OCI-LY7 (cell line): ENCODE measurements at regions of chr12 and their contacts with region 1.

Region 1: DNA sequence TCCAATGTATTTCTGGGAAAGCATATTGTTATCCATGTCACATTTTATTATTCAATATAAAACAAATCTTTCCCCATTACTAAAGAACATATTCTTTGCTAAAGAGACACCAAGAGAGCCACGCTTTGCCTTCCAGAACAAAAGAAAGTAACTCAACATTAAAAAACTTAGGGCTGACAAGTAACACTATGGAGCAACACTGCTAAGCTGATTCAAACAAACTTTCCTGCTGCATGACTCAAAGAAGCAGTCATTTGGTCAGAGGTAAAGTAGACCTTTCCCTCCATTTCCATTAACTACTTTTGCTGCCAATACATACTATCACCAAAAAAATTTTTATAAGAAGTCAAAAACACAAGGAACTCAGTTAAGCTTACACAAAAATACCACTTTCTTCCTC is 83.0 kb downstream of the DENND5B start:
- DNase-seq: no peak
- H3K4me3 ChIP-seq: no peak overlapping the region
- H3K27ac ChIP-seq: no peak overlapping the region
- H3K4me1 ChIP-seq: peaks cover 13% of the 10 kb centered on the region
- CTCF ChIP-seq: no peak

Region 2: GRCh38 chr12:31518680-31519227 is 10.8 kb after region 1 on chr12:
- CTCF ChIA-PET with region 1: interaction called, 5 read pairs
- POLR2A ChIA-PET with region 1: interaction called, 11 read pairs
- intact Hi-C with region 1: no loop called
- DNase-seq: peak; percentile 33
- H3K4me3 ChIP-seq: no peak overlapping the region
- H3K27ac ChIP-seq: peak overlapping the region; percentile 15
- H3K4me1 ChIP-seq: peaks cover 32% of the 10 kb centered on the region
- CTCF ChIP-seq: no peak

Region 3: GRCh38 chr12:31672521-31672920 is 164.6 kb after region 1 on chr12:
- CTCF ChIA-PET with region 1: no interaction called
- POLR2A ChIA-PET with region 1: no interaction called
- intact Hi-C with region 1: no loop called
- DNase-seq: no peak
- H3K4me3 ChIP-seq: no peak overlapping the region
- H3K27ac ChIP-seq: no peak overlapping the region
- H3K4me1 ChIP-seq: no peaks in the 10 kb centered on the region
- CTCF ChIP-seq: no peak